Activated CD4-positive, alpha-beta memory T cell treated with anti-CD3 and anti-CD28 coated beads for 36 hours (primary cell): ENCODE measurements at regions of chrX and their contacts with region 1.

Region 1: GRCh38 chrX:135484641-135485289 is 35.7 kb upstream of the INTS6L start:
- DNase-seq: peak; percentile 9
- H3K4me3 Mint-ChIP-seq: no peak overlapping the region
- H3K27ac Mint-ChIP-seq: no peak overlapping the region
- H3K4me1 Mint-ChIP-seq: no peaks in the 10 kb centered on the region
- H3K27me3 Mint-ChIP-seq: no peaks in the 10 kb centered on the region

Region 2: GRCh38 chrX:135543924-135544323 is 59.2 kb after region 1 on chrX:
- CTCF ChIA-PET with region 1: interaction called, 3 read pairs
- POLR2A ChIA-PET with region 1: no interaction called
- intact Hi-C with region 1: loop called (anchors 10 kb)
- DNase-seq: peak; percentile 35
- H3K4me3 Mint-ChIP-seq: no peak overlapping the region
- H3K27ac Mint-ChIP-seq: no peak overlapping the region
- H3K4me1 Mint-ChIP-seq: peaks cover 26% of the 10 kb centered on the region
- H3K27me3 Mint-ChIP-seq: no peaks in the 10 kb centered on the region

Region 3: DNA sequence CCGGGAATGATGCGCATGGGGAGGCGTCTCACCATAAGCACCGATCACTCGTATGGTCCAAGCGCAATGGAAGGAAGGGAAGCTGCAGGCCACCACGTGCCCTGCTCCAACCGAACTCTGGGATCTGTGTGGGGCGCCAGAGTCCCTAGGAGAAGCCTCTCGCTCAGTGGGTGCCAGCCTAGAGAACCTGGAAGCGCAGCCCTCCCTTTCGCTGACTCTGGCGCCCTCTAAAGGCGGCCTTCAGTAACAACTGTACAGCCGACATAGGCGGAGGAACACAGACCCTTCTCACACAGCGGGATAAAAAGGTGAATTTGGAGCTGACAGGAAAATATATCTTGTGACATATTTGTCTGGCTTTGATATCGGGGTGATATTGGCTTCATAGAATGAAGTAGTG is 111.7 kb after region 1 on chrX:
- CTCF ChIA-PET with region 1: interaction called, 7 read pairs
- POLR2A ChIA-PET with region 1: no interaction called
- intact Hi-C with region 1: loop called (anchors 1 kb)
- DNase-seq: peak; percentile 58
- H3K4me3 Mint-ChIP-seq: no peak overlapping the region
- H3K27ac Mint-ChIP-seq: no peak overlapping the region
- H3K4me1 Mint-ChIP-seq: no peaks in the 10 kb centered on the region
- H3K27me3 Mint-ChIP-seq: peaks cover 3% of the 10 kb centered on the region